Cardiac septum (tissue), 1 donor: ENCODE measurements at regions of chr11 and their contacts with region 1.

Region 1: DNA sequence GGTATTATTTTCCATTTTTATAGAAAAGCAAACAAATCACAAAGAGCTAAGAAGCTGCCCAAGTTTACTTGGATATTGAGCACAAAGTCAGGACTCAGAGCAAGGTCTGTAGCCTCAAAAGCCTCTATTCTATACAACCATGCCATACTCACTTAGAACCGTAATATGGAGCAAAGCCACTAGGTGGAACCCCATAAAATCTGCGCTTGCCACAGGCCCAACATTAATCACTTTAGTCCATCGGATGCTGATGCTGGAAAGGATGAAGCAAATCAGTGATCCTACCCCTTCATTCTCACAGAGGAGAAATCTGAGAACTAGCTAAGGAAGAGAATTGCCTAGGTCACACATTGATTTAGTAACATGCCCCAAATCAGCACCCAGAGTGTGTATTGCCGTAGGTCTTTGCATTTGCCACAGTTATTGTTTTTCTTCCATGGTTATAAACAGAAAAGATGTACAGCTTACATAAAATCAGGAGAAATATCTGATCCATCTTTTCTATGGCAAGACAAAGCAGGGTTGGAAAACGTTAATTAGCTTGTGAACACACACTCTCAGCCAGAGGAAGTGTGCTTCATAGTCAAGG is 56.7 kb upstream of the RAB38 start:
- DNase-seq: no peak

Region 2: DNA sequence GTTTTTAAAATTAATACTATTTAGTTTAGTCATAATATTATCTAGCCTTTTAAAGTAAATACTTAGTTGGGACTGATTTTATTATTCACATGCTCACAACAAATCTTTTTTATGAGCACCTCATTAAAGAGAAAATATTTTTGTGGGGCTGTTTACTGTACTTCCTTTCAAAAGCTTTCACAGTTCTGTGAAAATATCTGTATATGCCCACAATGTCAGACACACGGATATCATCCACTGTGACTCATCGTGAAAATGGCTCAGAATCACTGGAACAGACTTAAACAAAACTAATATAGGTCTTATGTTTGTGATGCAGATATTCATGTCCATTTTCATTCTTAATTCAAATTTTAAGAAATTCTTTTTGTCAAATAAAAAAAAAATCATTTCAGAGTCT is 361.9 kb before region 1 on chr11:
- intact Hi-C with region 1: no loop called
- DNase-seq: no peak

Region 3: GRCh38 chr11:88292171-88292843 is 60.3 kb after region 1 on chr11:
- intact Hi-C with region 1: no loop called
- DNase-seq: no peak

Region 4: DNA sequence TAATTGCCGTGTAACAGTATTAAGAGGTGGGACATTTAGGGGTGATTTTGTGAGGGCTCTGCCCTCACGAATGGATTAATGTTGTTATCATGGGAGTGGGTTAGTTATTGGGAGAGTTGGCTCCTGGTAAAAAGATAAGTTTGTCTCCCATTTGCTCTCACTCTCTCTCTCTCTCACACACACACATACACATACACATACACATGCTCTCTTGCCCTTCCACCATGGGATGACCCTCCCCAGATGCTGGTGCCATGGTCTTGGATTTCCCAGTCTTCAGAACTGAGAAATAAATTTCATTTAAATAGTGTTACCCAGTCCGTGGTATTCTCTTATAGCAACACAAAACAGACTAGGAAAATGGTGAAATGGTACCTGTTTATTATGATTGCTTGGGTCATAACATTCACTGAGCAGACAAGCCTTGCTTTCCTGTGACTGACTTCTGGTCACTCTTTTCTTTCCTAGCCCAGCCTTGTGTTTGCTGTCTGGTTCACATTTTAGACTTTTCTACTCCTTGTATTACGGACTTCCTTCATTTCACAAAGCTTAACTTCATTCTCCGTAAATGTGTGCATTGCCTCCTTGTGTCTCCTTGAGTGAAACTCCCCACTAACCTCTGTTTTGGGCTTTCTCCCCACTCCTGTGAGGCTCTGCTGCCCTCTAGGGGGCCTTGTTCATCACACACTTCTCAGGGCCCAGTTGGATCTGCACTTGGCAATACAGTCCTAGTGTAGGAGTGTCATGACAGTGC is 312.1 kb after region 1 on chr11:
- intact Hi-C with region 1: loop called (anchors 5 kb)
- DNase-seq: peak; percentile 80